PC-9 (cell line): ENCODE measurements at regions of chr12 and their contacts with region 1.

Region 1: GRCh38 chr12:30345744-30346471 is 349.8 kb downstream of the IPO8 start:
- DNase-seq: no peak
- H3K4me3 ChIP-seq: no peak overlapping the region
- H3K27ac ChIP-seq: no peak overlapping the region
- H3K4me1 ChIP-seq: no peaks in the 10 kb centered on the region
- H3K27me3 ChIP-seq: no peaks in the 10 kb centered on the region
- CTCF ChIP-seq: no peak

Region 2: DNA sequence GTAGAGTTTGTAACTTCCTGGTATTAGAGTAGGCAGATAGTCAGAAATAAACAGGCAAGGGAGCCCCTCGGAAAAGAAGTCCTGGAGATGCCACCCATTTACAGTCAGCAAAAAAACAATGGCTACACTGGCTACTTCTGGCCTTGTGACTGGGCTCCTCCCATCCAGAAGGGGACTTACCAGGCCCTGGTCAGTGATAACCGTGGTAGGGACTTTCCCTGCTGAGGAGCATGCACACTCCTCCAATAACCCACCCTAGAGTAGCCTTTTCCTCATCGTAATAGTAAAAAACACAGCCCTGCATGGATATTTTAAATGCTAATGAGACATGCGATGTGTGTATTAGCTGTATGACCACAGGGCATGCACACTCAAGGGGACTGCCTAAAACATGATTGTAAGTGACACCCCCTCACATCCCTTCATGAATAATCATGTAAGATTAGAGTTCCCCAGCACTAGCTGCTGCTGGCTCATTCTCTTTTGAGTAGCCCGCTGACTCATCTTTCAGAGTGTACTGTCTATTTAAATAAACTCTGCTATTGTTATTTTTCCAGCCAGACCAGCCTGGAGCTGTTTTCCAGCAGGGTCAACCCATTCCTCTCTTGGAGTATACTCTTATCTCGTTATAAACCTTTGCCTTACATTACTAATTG is 148.4 kb before region 1 on chr12:
- CTCF ChIA-PET with region 1: no interaction called
- POLR2A ChIA-PET with region 1: no interaction called
- intact Hi-C with region 1: no loop called
- DNase-seq: no peak
- H3K4me3 ChIP-seq: no peak overlapping the region
- H3K27ac ChIP-seq: no peak overlapping the region
- H3K4me1 ChIP-seq: no peaks in the 10 kb centered on the region
- H3K27me3 ChIP-seq: no peaks in the 10 kb centered on the region
- CTCF ChIP-seq: no peak

Region 3: GRCh38 chr12:30251546-30251945 is 94.4 kb before region 1 on chr12:
- CTCF ChIA-PET with region 1: no interaction called
- POLR2A ChIA-PET with region 1: no interaction called
- intact Hi-C with region 1: loop called (anchors 1 kb)
- DNase-seq: no peak
- H3K4me3 ChIP-seq: no peak overlapping the region
- H3K27ac ChIP-seq: no peak overlapping the region
- H3K4me1 ChIP-seq: no peaks in the 10 kb centered on the region
- H3K27me3 ChIP-seq: no peaks in the 10 kb centered on the region
- CTCF ChIP-seq: no peak

Region 4: DNA sequence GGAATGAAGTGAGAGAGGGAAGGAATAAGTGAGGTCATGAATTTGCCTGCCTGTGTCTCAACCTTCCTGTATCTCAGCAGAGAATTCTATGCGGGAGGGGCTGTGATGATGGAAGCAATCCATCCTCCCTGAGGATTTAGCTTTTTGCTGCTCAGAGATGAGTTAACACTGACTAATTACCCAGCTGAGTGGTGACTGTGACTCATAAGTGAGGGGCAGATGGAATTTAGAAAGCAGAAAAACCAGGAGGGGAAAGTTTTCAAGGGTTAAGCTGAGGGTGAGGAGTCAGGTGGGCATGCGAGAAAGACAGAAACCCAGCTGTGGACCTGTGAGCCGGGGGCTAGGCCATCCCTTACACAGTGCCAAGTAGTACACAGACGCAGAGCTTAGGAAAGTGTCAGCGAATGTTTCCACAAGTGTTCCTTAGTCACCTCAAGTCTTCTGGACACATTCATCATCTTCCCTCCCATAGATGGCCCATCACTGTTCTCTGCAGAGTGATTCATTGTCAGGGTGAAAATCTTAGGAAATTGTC is 71.9 kb after region 1 on chr12:
- CTCF ChIA-PET with region 1: no interaction called
- POLR2A ChIA-PET with region 1: no interaction called
- intact Hi-C with region 1: no loop called
- DNase-seq: no peak
- H3K4me3 ChIP-seq: no peak overlapping the region
- H3K27ac ChIP-seq: no peak overlapping the region
- H3K4me1 ChIP-seq: peaks cover 5% of the 10 kb centered on the region; the same call in 1 of the 2 replicates
- H3K27me3 ChIP-seq: no peaks in the 10 kb centered on the region
- CTCF ChIP-seq: no peak

Region 5: GRCh38 chr12:30546121-30546520 is 200.2 kb after region 1 on chr12:
- CTCF ChIA-PET with region 1: no interaction called
- POLR2A ChIA-PET with region 1: no interaction called
- intact Hi-C with region 1: no loop called
- DNase-seq: peak; percentile 31 to 36
- H3K4me3 ChIP-seq: no peak overlapping the region
- H3K27ac ChIP-seq: peak overlapping the region; percentile 39; the same call in 1 of the 2 replicates
- H3K4me1 ChIP-seq: peaks cover 10% of the 10 kb centered on the region; the same call in 1 of the 2 replicates
- H3K27me3 ChIP-seq: no peaks in the 10 kb centered on the region
- CTCF ChIP-seq: no peak